Activated CD4-positive, alpha-beta T cell treated with anti-CD3 and anti-CD28 coated beads, Interleukin-2, amount 10 ng/mL, durations not matched to agents 7 days and 5 days (primary cell): ENCODE measurements at regions of chr2 and their contacts with region 1.

Region 1: GRCh38 chr2:177239932-177240630 is 24.4 kb downstream of the NFE2L2 start:
- DNase-seq: peak; percentile 53
- H3K4me3 Mint-ChIP-seq: peak overlapping the region; percentile 15
- H3K27ac Mint-ChIP-seq: peak overlapping the region; percentile 83
- H3K4me1 Mint-ChIP-seq: peaks cover 75% of the 10 kb centered on the region
- H3K27me3 Mint-ChIP-seq: no peaks in the 10 kb centered on the region

Region 2: DNA sequence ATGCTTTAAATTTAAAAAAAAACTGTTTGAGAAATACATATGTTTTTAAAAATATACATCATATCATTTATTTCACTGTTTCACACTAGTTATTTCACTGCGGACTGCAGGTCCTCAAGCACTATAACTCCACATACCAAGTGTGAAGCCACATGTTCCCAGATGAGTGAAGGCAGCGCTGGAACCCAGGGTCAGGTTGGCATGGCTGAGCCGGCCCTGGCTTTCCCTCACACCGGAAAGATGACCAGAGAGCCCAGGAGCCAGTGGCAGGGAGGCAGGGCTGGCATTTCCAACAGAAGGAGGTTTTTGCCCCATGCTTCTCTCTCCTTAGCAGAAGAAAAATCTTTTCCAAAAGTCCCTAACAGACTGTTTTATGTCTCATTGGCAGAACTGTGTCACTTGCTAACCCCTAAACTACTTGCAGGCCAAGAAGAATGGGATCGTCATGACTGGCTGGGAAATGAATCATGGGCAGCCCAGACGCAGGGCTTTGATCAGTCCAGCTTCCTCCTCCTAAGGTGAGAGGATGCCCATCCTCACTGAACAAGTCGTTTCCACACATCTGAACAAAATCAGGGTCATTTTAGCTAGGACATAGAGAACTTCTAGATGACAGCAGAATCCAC is 315.1 kb before region 1 on chr2:
- CTCF ChIA-PET with region 1: no interaction called
- POLR2A ChIA-PET with region 1: no interaction called
- DNase-seq: no peak
- H3K4me3 Mint-ChIP-seq: no peak overlapping the region
- H3K27ac Mint-ChIP-seq: no peak overlapping the region
- H3K4me1 Mint-ChIP-seq: no peaks in the 10 kb centered on the region
- H3K27me3 Mint-ChIP-seq: peaks cover 2% of the 10 kb centered on the region

Region 3: DNA sequence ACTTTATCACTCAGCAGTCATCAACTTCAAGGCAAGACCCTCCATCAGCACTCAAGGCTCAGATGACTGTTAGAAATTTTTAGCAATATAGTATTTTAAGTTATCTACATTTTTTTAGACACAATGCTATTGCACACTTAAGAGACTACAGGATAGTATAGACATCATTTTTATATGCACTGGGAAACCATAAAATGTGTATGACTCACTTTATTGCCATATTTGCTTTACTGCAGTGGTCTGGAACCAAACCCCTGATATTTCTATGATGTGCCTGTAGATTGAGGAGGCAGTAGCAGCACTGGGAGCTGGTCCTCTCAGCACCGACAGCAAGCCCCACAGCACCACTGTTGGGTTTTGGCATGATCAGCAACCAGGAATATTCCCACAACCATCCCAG is 292.3 kb before region 1 on chr2:
- CTCF ChIA-PET with region 1: no interaction called
- POLR2A ChIA-PET with region 1: no interaction called
- DNase-seq: no peak
- H3K4me3 Mint-ChIP-seq: no peak overlapping the region
- H3K27ac Mint-ChIP-seq: no peak overlapping the region
- H3K4me1 Mint-ChIP-seq: no peaks in the 10 kb centered on the region
- H3K27me3 Mint-ChIP-seq: peaks cover 3% of the 10 kb centered on the region

Region 4: GRCh38 chr2:177124371-177124770 is 115.7 kb before region 1 on chr2:
- CTCF ChIA-PET with region 1: no interaction called
- POLR2A ChIA-PET with region 1: no interaction called
- DNase-seq: no peak
- H3K4me3 Mint-ChIP-seq: no peak overlapping the region
- H3K27ac Mint-ChIP-seq: no peak overlapping the region
- H3K4me1 Mint-ChIP-seq: peaks cover 4% of the 10 kb centered on the region
- H3K27me3 Mint-ChIP-seq: peaks cover 16% of the 10 kb centered on the region

Region 5: GRCh38 chr2:177229448-177230242 is 10.4 kb before region 1 on chr2:
- CTCF ChIA-PET with region 1: interaction called, 11 read pairs
- POLR2A ChIA-PET with region 1: no interaction called
- DNase-seq: no peak
- H3K4me3 Mint-ChIP-seq: no peak overlapping the region
- H3K27ac Mint-ChIP-seq: peak overlapping the region; percentile 34
- H3K4me1 Mint-ChIP-seq: peaks cover 18% of the 10 kb centered on the region
- H3K27me3 Mint-ChIP-seq: no peaks in the 10 kb centered on the region